GM12878 (cell line): ENCODE measurements at regions of chr21 and their contacts with region 1.

Region 1: GRCh38 chr21:25507522-25507921 is 99.8 kb downstream of the MRPL39 start:
- DNase-seq: no peak
- ATAC-seq: peak; percentile 57
- H3K4me3 ChIP-seq: no peak overlapping the region
- H3K27ac ChIP-seq: peak overlapping the region; percentile 95
- H3K4me1 ChIP-seq: peaks cover 41% of the 10 kb centered on the region
- H3K27me3 ChIP-seq: no peaks in the 10 kb centered on the region
- CTCF ChIP-seq: peak; percentile 19 to 52 (median 31); a peak in 4 of 6 replicates
- EP300 ChIP-seq: no peak
- POLR2A ChIP-seq: no peak
- RAD21 ChIP-seq: peak; percentile 60

Region 2: GRCh38 chr21:25464275-25464674 is 43.2 kb before region 1 on chr21:
- CTCF ChIA-PET with region 1: interaction called, 3 read pairs
- POLR2A ChIA-PET with region 1: interaction called, 5 read pairs
- RAD21 ChIA-PET with region 1: interaction called, 5 read pairs
- SMC1A ChIA-PET with region 1: interaction called, 11 read pairs
- in situ Hi-C with region 1: no loop called
- intact Hi-C with region 1: loop called (anchors 2 kb)
- DNase-seq: no peak
- ATAC-seq: peak; percentile 76
- H3K4me3 ChIP-seq: peak overlapping the region; percentile 22; the same call in 1 of the 2 replicates
- H3K27ac ChIP-seq: peak overlapping the region; percentile 87
- H3K4me1 ChIP-seq: peaks cover 41% of the 10 kb centered on the region
- H3K27me3 ChIP-seq: no peaks in the 10 kb centered on the region
- CTCF ChIP-seq: no peak
- EP300 ChIP-seq: peak; percentile 69 to 94; a peak in 3 of 4 replicates
- POLR2A ChIP-seq: no peak
- RAD21 ChIP-seq: no peak

Region 3: GRCh38 chr21:25568246-25568645 is 60.7 kb after region 1 on chr21:
- CTCF ChIA-PET with region 1: interaction called, 4 read pairs
- POLR2A ChIA-PET with region 1: interaction called, 18 read pairs
- RAD21 ChIA-PET with region 1: interaction called, 12 read pairs
- SMC1A ChIA-PET with region 1: interaction called, 13 read pairs
- in situ Hi-C with region 1: loop called (anchors 10 kb)
- intact Hi-C with region 1: loop called (anchors 1 kb)
- DNase-seq: no peak
- ATAC-seq: peak; percentile 12
- H3K4me3 ChIP-seq: peak overlapping the region; percentile 87
- H3K27ac ChIP-seq: peak overlapping the region; percentile 92
- H3K4me1 ChIP-seq: peaks cover 16% of the 10 kb centered on the region; the same call in 1 of the 2 replicates
- H3K27me3 ChIP-seq: no peaks in the 10 kb centered on the region
- CTCF ChIP-seq: no peak
- EP300 ChIP-seq: no peak
- POLR2A ChIP-seq: peak; percentile 88
- RAD21 ChIP-seq: no peak

Region 4: DNA sequence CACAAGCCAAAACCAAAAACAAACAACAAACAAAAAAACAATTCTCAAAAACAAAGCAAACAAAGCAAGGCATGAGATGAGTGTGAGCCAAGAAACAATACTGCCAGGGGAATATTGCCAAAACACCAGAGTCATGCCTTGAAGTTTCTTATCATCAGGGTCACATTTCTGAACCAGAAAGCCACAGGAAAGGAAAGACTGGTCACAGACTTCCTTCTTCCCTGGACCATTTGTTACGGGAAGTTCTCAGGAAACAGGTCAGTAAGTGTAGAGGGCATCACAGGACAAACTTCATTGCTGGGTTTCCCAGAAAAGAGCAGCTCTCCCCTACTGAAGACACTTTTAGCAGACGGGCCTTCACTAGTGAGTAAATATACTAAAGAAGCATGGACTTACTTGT is 418.4 kb after region 1 on chr21:
- CTCF ChIA-PET with region 1: no interaction called
- POLR2A ChIA-PET with region 1: no interaction called
- RAD21 ChIA-PET with region 1: no interaction called
- SMC1A ChIA-PET with region 1: no interaction called
- in situ Hi-C with region 1: no loop called
- intact Hi-C with region 1: no loop called
- DNase-seq: no peak
- ATAC-seq: no peak
- H3K4me3 ChIP-seq: no peak overlapping the region
- H3K27ac ChIP-seq: no peak overlapping the region
- H3K4me1 ChIP-seq: no peaks in the 10 kb centered on the region
- H3K27me3 ChIP-seq: no peaks in the 10 kb centered on the region
- CTCF ChIP-seq: no peak
- EP300 ChIP-seq: no peak
- POLR2A ChIP-seq: no peak
- RAD21 ChIP-seq: no peak